ENCODE measurements at regions of chr10 and their contacts with region 1.

Region 1: GRCh38 chr10:128150045-128150493 is 23.8 kb upstream of the MKI67 start:
- DNase-seq: peak in 6 of 7 donors; percentile 25 to 49 (median 44)
- H3K4me3 ChIP-seq: peak overlapping the region in 1 of 4 donors; percentile 36
- H3K27ac ChIP-seq: no peak overlapping the region
- H3K4me1 ChIP-seq: peaks cover 0 to 4% of the 10 kb centered on the region in 2 donors
- H3K27me3 ChIP-seq: peaks cover 25% of the 10 kb centered on the region
- CTCF ChIP-seq: peak; percentile 27 to 86 (median 62)
- POLR2A ChIP-seq: no peak

Region 2: DNA sequence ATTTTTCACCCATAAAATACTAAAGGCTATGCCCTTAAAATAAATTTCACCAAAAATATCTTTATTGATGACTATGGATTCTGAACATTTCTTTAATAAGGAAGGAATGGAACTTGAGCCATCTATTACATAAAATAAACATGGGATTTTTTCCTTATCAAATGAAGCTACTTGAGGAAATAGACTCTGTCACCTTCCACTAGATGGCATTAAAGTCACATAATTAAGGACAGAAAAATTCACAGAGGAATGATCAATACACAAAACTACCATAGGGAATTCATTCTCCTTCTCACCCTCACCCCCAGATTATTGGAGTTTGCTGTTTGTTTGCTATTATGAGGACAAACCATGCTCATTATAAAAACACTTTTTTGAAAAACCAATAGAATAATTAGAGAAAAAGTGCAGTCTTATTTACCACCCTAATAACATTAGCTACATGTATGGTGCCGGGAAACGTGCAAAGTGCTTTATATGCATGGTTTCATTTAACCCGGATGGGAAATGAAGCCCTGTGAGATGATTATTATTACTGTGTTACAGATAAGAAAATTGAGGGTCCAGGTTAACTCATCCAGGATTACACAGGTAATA is 434.2 kb before region 1 on chr10:
- intact Hi-C with region 1: loop called in 1 of 2 experiments (anchors 5 kb)
- DNase-seq: no peak
- H3K4me3 ChIP-seq: no peak overlapping the region
- H3K27ac ChIP-seq: no peak overlapping the region
- H3K4me1 ChIP-seq: no peaks in the 10 kb centered on the region
- H3K27me3 ChIP-seq: peaks cover 6% of the 10 kb centered on the region
- CTCF ChIP-seq: peak; percentile 26 to 68 (median 57)
- POLR2A ChIP-seq: no peak

Region 3: GRCh38 chr10:127872871-127873600 is 277.0 kb before region 1 on chr10:
- intact Hi-C with region 1: loop called in 1 of 2 experiments (anchors 10 kb)
- DNase-seq: peak in 2 of 7 donors; percentile 31 to 50
- H3K4me3 ChIP-seq: no peak overlapping the region
- H3K27ac ChIP-seq: no peak overlapping the region
- H3K4me1 ChIP-seq: no peaks in the 10 kb centered on the region
- H3K27me3 ChIP-seq: no peaks in the 10 kb centered on the region
- CTCF ChIP-seq: peak in 2 of 6 experiments; percentile 12 to 27
- POLR2A ChIP-seq: no peak

Region 4: GRCh38 chr10:128078136-128078969 is 71.7 kb before region 1 on chr10:
- intact Hi-C with region 1: loop called in 1 of 2 experiments (anchors 5 kb)
- DNase-seq: peak in 1 of 7 donors; percentile 51
- H3K4me3 ChIP-seq: no peak overlapping the region
- H3K27ac ChIP-seq: no peak overlapping the region
- H3K4me1 ChIP-seq: no peaks in the 10 kb centered on the region
- H3K27me3 ChIP-seq: no peaks in the 10 kb centered on the region
- CTCF ChIP-seq: peak; percentile 20 to 53 (median 42)
- POLR2A ChIP-seq: no peak

Measured in adrenal gland (tissue), 19 donors.